ENCODE measurements at regions of chr10 and their contacts with region 1.

Region 1: GRCh38 chr10:43689955-43690771 is 41.5 kb upstream of the ZNF32 start:
- DNase-seq: peak; percentile 96
- H3K4me3 ChIP-seq: peak overlapping the region; percentile 46 to 68
- H3K27ac ChIP-seq: peak overlapping the region in 1 of 2 experiments; percentile 12; a peak in 1 of 4 replicates
- H3K4me1 ChIP-seq: peaks cover 0 to 10% of the 10 kb centered on the region in 2 experiments; a peak in 1 of 4 replicates
- H3K27me3 ChIP-seq: no peaks in the 10 kb centered on the region
- CTCF ChIP-seq: peak; percentile 78
- EP300 ChIP-seq: no peak
- RAD21 ChIP-seq: peak; percentile 80

Region 2: GRCh38 chr10:43461950-43462349 is 228.2 kb before region 1 on chr10:
- CTCF ChIA-PET with region 1: no interaction called
- POLR2A ChIA-PET with region 1: no interaction called
- DNase-seq: peak; percentile 71
- H3K4me3 ChIP-seq: peak overlapping the region in 1 of 2 experiments; percentile 6; a peak in 1 of 4 replicates
- H3K27ac ChIP-seq: no peak overlapping the region
- H3K4me1 ChIP-seq: no peaks in the 10 kb centered on the region
- H3K27me3 ChIP-seq: no peaks in the 10 kb centered on the region
- CTCF ChIP-seq: peak; percentile 82
- EP300 ChIP-seq: no peak
- RAD21 ChIP-seq: peak; percentile 86

Region 3: DNA sequence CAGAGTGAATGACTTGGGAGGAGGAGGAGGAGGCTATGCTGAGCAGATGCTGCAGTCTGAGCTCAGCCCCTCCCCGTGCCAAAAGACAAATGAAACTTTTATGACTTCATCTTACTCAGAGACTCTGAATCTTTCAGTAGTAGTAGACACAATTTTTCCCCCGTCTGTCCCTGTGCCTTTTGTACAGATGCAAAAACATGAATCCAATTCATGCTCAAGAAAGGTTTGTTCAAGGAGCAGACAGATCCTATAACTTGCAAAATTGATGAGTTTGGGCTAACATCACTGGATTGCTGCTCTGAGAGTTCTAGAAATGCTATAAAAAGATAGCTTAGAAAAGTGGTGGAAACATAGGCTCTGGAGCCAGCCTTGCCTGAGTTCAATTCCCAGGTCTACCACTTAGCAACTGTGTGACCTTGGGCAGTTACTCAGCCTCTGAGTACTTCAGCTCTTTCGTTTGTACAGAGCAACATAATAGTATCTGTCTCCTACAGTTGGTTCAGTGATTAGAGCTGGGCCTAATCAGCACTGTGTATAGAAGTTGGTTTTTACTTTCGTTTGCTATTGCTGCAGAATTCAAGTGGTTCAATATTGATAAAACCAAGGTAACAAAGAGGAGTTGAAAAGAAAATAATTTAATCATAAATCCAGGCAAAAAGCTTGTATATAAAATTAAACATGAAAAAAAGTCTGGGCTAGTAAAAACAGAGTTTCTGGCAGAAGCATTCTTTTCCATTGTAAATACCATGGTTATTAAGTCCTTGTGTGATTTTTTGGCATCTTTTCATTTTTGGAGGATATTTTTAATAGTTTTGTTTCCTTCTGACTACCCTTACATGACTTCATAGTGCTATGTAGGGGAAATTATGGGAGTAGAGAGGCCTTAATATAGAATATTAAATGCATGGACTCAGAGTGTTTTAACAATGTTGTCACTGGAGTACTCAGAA is 132.7 kb after region 1 on chr10:
- CTCF ChIA-PET with region 1: interaction called, 13 read pairs
- POLR2A ChIA-PET with region 1: no interaction called
- DNase-seq: no peak
- H3K4me3 ChIP-seq: no peak overlapping the region
- H3K27ac ChIP-seq: peak overlapping the region; percentile 54 to 66; a peak in 3 of 4 replicates
- H3K4me1 ChIP-seq: peaks cover 0 to 8% of the 10 kb centered on the region in 2 experiments; a peak in 2 of 4 replicates
- H3K27me3 ChIP-seq: no peaks in the 10 kb centered on the region
- CTCF ChIP-seq: no peak
- EP300 ChIP-seq: no peak
- RAD21 ChIP-seq: no peak

Region 4: GRCh38 chr10:43939939-43940820 is 250.0 kb after region 1 on chr10:
- CTCF ChIA-PET with region 1: interaction called, 16 read pairs
- POLR2A ChIA-PET with region 1: no interaction called
- DNase-seq: peak; percentile 68
- H3K4me3 ChIP-seq: no peak overlapping the region
- H3K27ac ChIP-seq: peak overlapping the region in 1 of 2 experiments; percentile 58; a peak in 2 of 4 replicates
- H3K4me1 ChIP-seq: peaks cover 0 to 39% of the 10 kb centered on the region in 2 experiments; a peak in 2 of 4 replicates
- H3K27me3 ChIP-seq: no peaks in the 10 kb centered on the region
- CTCF ChIP-seq: no peak
- EP300 ChIP-seq: peak in 1 of 2 experiments; percentile 73; a peak in 1 of 4 replicates
- RAD21 ChIP-seq: no peak; the same call in 1 of the 2 replicates

Region 5: GRCh38 chr10:44261710-44262455 is 571.7 kb after region 1 on chr10:
- CTCF ChIA-PET with region 1: interaction called, 24 read pairs
- POLR2A ChIA-PET with region 1: no interaction called
- DNase-seq: peak; percentile 55
- H3K4me3 ChIP-seq: no peak overlapping the region
- H3K27ac ChIP-seq: peak overlapping the region in 1 of 2 experiments; percentile 91; a peak in 2 of 4 replicates
- H3K4me1 ChIP-seq: peaks cover 0 to 51% of the 10 kb centered on the region in 2 experiments; a peak in 2 of 4 replicates
- H3K27me3 ChIP-seq: no peaks in the 10 kb centered on the region
- CTCF ChIP-seq: no peak
- EP300 ChIP-seq: no peak
- RAD21 ChIP-seq: no peak

Region 6: GRCh38 chr10:44337081-44337480 is 646.9 kb after region 1 on chr10:
- CTCF ChIA-PET with region 1: interaction called, 10 read pairs
- POLR2A ChIA-PET with region 1: no interaction called
- DNase-seq: no peak
- H3K4me3 ChIP-seq: no peak overlapping the region
- H3K27ac ChIP-seq: no peak overlapping the region
- H3K4me1 ChIP-seq: no peaks in the 10 kb centered on the region; a peak in 1 of 4 replicates
- H3K27me3 ChIP-seq: no peaks in the 10 kb centered on the region
- CTCF ChIP-seq: no peak
- EP300 ChIP-seq: no peak
- RAD21 ChIP-seq: no peak